Sigmoid colon (tissue), 7 donors: ENCODE measurements at regions of chr15 and their contacts with region 1.

Region 1: DNA sequence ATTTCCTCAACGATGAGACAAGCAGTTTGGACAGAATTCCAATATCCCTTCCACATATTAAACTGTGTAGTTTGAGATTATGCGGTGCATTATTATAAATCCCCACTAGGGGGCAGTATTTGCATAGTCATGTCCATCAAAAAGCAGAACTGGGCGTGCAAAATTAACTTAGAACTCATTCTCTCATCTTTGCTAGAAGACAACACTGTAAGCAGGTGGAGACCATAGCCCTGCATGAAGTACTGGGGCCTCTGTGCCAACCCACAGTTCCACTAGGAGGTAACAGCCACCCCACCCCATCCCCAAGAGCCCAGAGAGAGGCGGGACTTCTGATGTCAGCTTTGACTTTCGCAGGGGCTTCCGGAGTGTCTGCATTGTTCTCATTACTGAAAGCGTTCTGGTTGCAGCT is 106.6 kb upstream of the TMC3 start:
- DNase-seq: no peak
- H3K4me3 ChIP-seq: no peak overlapping the region
- H3K27ac ChIP-seq: no peak overlapping the region
- H3K4me1 ChIP-seq: no peaks in the 10 kb centered on the region
- H3K27me3 ChIP-seq: no peaks in the 10 kb centered on the region
- CTCF ChIP-seq: peak; percentile 58 to 90 (median 86)
- EP300 ChIP-seq: no peak
- POLR2A ChIP-seq: no peak

Region 2: GRCh38 chr15:81410318-81410753 is 70.3 kb before region 1 on chr15:
- intact Hi-C with region 1: loop called (anchors 2 kb)
- DNase-seq: peak; percentile 77
- H3K4me3 ChIP-seq: no peak overlapping the region
- H3K27ac ChIP-seq: no peak overlapping the region
- H3K4me1 ChIP-seq: peaks cover 0 to 8% (median 0%) of the 10 kb centered on the region in 4 donors
- H3K27me3 ChIP-seq: peaks cover 0 to 3% (median 0%) of the 10 kb centered on the region in 3 donors
- CTCF ChIP-seq: peak in 3 of 4 experiments; percentile 32 to 48 (median 46)
- EP300 ChIP-seq: no peak
- POLR2A ChIP-seq: no peak

Region 3: DNA sequence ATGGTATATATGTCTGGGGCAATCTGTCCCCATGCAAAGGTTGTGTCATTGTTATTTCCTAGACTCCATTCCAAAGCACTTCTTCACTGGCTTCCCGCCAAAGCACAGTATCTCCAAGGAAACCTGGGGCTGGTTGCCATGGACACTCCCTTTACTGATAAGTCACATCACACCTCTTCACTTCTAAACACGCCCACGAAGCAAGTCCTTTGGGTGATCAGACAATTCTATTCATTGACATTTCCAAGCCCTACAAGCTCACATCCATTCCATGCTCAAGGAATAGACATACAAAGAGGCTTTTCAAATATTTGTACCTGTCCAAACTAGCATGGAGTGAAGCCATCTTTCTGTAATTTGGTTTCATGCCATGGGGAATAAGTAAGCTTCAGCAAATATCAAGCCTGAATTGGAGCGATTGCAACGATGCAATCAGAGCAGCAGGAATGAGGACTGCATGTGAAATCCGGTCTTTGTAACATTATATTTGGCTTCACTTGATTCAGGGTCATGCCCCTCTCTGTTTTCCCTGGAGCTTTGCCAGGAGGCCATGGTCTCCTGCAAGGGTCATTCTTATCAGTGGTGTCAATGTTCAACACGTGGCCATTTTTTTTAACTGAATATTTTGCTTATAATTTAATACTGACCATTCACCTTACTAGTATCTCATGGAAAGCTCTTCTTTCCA is 94.9 kb after region 1 on chr15:
- intact Hi-C with region 1: no loop called
- DNase-seq: no peak
- H3K4me3 ChIP-seq: no peak overlapping the region
- H3K27ac ChIP-seq: no peak overlapping the region
- H3K4me1 ChIP-seq: no peaks in the 10 kb centered on the region
- H3K27me3 ChIP-seq: no peaks in the 10 kb centered on the region
- CTCF ChIP-seq: no peak
- EP300 ChIP-seq: no peak
- POLR2A ChIP-seq: no peak

Region 4: DNA sequence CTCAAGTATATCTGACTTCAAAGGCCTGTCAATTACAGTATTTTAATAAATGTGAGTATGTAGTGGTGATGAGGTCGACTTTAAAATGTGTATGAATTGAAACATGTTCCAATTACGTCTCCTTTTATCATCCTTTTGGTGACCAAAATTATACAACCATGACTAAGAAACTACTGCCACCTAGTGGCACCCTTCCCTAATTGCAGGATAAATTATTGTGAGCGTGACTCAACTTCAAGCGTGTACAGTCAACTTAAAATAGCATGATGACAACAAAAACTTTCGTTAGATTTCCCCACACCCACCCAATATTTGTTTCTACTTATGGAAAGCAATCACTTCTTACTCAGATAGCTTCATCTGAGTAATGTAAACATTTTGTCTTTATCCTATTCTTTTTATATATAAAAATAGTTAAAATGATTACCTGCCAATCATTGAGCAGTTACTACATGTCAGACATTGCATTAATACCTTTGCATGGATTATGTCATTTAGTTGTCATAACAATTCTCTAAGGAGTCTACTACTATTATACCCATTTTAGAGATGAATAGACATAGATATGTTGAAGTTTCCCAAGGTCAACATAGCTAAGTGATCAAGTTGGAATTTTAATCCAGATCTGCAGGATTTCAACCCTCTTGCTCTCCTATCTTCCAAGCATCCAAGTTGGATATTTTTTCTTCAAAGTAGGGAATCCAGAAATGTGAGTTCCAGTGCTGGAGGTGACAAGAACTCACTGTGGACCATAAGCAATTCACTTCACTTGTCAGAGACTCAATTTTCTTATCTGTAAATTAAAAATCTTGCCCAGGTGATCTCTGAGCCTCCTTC is 459.2 kb after region 1 on chr15:
- intact Hi-C with region 1: loop called (anchors 5 kb)
- DNase-seq: no peak
- H3K4me3 ChIP-seq: no peak overlapping the region
- H3K27ac ChIP-seq: no peak overlapping the region
- H3K4me1 ChIP-seq: no peaks in the 10 kb centered on the region
- H3K27me3 ChIP-seq: no peaks in the 10 kb centered on the region
- CTCF ChIP-seq: peak in 3 of 4 experiments; percentile 30 to 56 (median 31)
- EP300 ChIP-seq: no peak
- POLR2A ChIP-seq: no peak

Region 5: GRCh38 chr15:82139823-82140268 is 659.2 kb after region 1 on chr15:
- intact Hi-C with region 1: loop called (anchors 5 kb)
- DNase-seq: no peak
- H3K4me3 ChIP-seq: no peak overlapping the region
- H3K27ac ChIP-seq: no peak overlapping the region
- H3K4me1 ChIP-seq: peaks cover 0 to 10% (median 1%) of the 10 kb centered on the region in 4 donors
- H3K27me3 ChIP-seq: no peaks in the 10 kb centered on the region
- CTCF ChIP-seq: peak; percentile 57 to 72 (median 64)
- EP300 ChIP-seq: no peak
- POLR2A ChIP-seq: no peak